ENCODE measurements at regions of chr16 and their contacts with region 1.

Region 1: GRCh38 chr16:31713071-31713944 is 160.3 kb upstream of the ZNF267 start:
- DNase-seq: peak; percentile 87 to 92
- ATAC-seq: peak; percentile 95 to 96
- H3K4me3 ChIP-seq: peak overlapping the region; percentile 89 to 96 (median 92)
- H3K27ac ChIP-seq: peak overlapping the region; percentile 94 to 96 (median 94)
- H3K4me1 ChIP-seq: peaks cover 11 to 12% of the 10 kb centered on the region in 2 donors
- H3K27me3 ChIP-seq: no peaks in the 10 kb centered on the region
- CTCF ChIP-seq: no peak
- POLR2A ChIP-seq: peak; percentile 78 to 87

Region 2: GRCh38 chr16:29790183-29790952 is 1922.9 kb before region 1 on chr16 and contains the start of gene KIF22:
- in situ Hi-C with region 1: no loop called
- intact Hi-C with region 1: loop called (anchors 10 kb)
- DNase-seq: peak; percentile 99
- ATAC-seq: peak; percentile 96 to 98
- H3K4me3 ChIP-seq: peak within 1 kb of the TSS; percentile 91 to 95 (median 92)
- H3K27ac ChIP-seq: peak within 1 kb of the TSS; percentile 89 to 95 (median 93)
- H3K4me1 ChIP-seq: peaks cover 18 to 24% of the 10 kb centered on the region in 2 donors
- H3K27me3 ChIP-seq: no peaks in the 10 kb centered on the region
- CTCF ChIP-seq: peak; percentile 68 to 89 (median 79)
- POLR2A ChIP-seq: peak; percentile 51 to 60
- total RNA-seq, gene KIF22: 9.0 to 13.9 (median 12.8) TPM

Region 3: GRCh38 chr16:31472709-31473203 is 240.6 kb before region 1 on chr16:
- in situ Hi-C with region 1: no loop called
- intact Hi-C with region 1: loop called (anchors 5 kb)
- DNase-seq: peak; percentile 60 to 81
- ATAC-seq: peak; percentile 79 to 82
- H3K4me3 ChIP-seq: peak overlapping the region; percentile 63 to 76 (median 67)
- H3K27ac ChIP-seq: peak overlapping the region; percentile 83 to 89 (median 87)
- H3K4me1 ChIP-seq: peaks cover 0 to 11% of the 10 kb centered on the region in 2 donors
- H3K27me3 ChIP-seq: peaks cover 4 to 21% (median 5%) of the 10 kb centered on the region in 3 donors
- CTCF ChIP-seq: peak; percentile 65 to 80 (median 68)
- POLR2A ChIP-seq: no peak

Region 4: DNA sequence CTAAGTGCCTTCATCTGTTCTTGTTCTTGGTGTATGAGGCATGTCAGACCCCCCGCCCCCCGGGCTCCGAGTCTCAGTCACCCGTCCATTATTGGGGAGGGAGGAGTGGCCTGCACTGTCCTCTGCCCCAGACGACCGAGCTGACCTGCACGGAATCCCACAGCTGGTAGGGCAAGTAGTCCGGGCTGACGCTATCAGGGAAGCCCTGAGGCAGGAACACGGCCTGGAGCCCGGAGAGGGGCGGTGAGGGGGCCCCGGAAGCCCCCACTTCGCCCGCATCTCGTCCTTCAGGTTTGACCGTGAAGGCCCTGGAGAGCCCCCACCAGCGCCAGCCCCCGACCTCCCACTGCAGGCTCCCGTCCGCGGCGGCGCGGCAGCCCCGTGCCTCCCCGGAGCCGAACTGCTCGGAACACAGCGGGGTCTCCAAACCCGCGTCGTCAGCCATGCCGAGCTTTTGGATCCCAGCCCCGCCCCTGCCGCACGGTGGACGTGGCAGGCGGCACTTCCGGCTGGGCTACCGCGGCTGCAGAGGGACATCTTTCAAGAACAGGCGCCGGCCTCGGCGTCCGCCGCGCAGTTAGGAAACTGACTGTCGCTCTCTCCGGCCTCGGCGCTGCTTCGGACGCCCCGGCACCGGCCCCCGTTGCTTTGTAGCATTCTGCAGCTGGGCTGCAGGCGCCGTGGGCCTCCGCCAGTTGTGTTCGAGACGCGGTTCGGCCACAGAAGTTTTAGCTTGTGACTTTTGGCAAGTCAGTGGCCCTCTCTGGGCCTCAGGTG is 205.2 kb before region 1 on chr16 and contains the start of gene RUSF1:
- in situ Hi-C with region 1: loop called in 2 of 4 experiments (anchors 25 kb)
- intact Hi-C with region 1: loop called (anchors 1 kb)
- DNase-seq: peak; percentile 86 to 88
- ATAC-seq: peak; percentile 94 to 95
- H3K4me3 ChIP-seq: peak within 1 kb of the TSS; percentile 74 to 98 (median 87)
- H3K27ac ChIP-seq: peak within 1 kb of the TSS; percentile 88 to 93 (median 91)
- H3K4me1 ChIP-seq: peaks cover 24 to 28% of the 10 kb centered on the region in 2 donors
- H3K27me3 ChIP-seq: no peaks in the 10 kb centered on the region
- CTCF ChIP-seq: peak in 1 of 5 experiments; percentile 12
- POLR2A ChIP-seq: peak; percentile 86 to 89
- total RNA-seq, gene RUSF1: 6.7 to 15.1 (median 8.5) TPM

Region 5: GRCh38 chr16:31700526-31701388 is 12.6 kb before region 1 on chr16:
- in situ Hi-C with region 1: no loop called
- intact Hi-C with region 1: loop called (anchors 1 kb)
- DNase-seq: peak; percentile 41 to 57
- ATAC-seq: peak in 1 of 2 donors; percentile 80
- H3K4me3 ChIP-seq: peak overlapping the region; percentile 58 to 89 (median 74)
- H3K27ac ChIP-seq: peak overlapping the region in 2 of 4 donors; percentile 31 to 33
- H3K4me1 ChIP-seq: peaks cover 6% of the 10 kb centered on the region in 2 donors
- H3K27me3 ChIP-seq: no peaks in the 10 kb centered on the region
- CTCF ChIP-seq: no peak
- POLR2A ChIP-seq: no peak

Region 6: DNA sequence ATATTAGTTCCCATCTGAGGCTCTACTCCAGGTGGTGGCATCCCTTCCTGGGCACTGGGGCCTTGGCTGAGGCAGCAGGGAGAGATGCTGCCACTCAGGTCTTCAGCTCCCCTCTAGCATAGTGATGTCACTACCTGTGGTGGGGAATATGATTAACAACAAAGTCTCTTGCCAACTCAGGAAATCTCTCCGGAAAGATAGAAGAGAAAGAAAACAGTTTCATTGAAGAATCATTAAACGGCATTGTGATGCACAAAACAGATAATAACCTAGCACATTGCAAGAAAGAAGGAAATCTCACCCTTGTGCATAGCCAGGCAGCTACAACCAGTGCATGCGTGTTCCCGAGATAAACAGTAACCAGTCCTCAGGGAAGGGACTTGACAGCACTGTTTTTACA is 148.1 kb after region 1 on chr16:
- in situ Hi-C with region 1: no loop called
- intact Hi-C with region 1: no loop called
- DNase-seq: no peak
- ATAC-seq: no peak
- H3K4me3 ChIP-seq: no peak overlapping the region
- H3K27ac ChIP-seq: no peak overlapping the region
- H3K4me1 ChIP-seq: no peaks in the 10 kb centered on the region
- H3K27me3 ChIP-seq: no peaks in the 10 kb centered on the region
- CTCF ChIP-seq: no peak
- POLR2A ChIP-seq: no peak

Region 7: GRCh38 chr16:31873556-31874365 is 160.5 kb after region 1 on chr16 and contains the start of gene ZNF267:
- in situ Hi-C with region 1: no loop called
- intact Hi-C with region 1: loop called (anchors 5 kb)
- DNase-seq: peak; percentile 88 to 94
- ATAC-seq: peak; percentile 97 to 98
- H3K4me3 ChIP-seq: peak within 1 kb of the TSS; percentile 77 to 98 (median 88)
- H3K27ac ChIP-seq: peak within 1 kb of the TSS; percentile 76 to 92 (median 84)
- H3K4me1 ChIP-seq: peaks cover 16 to 23% of the 10 kb centered on the region in 2 donors
- H3K27me3 ChIP-seq: no peaks in the 10 kb centered on the region
- CTCF ChIP-seq: no peak
- POLR2A ChIP-seq: peak; percentile 76 to 77
- total RNA-seq, gene ZNF267: 6.5 to 13.3 (median 8.2) TPM

Measured in gastrocnemius medialis (tissue), 4 donors.